OCI-LY7 (cell line): ENCODE measurements at regions of chr12 and their contacts with region 1.

Region 1: DNA sequence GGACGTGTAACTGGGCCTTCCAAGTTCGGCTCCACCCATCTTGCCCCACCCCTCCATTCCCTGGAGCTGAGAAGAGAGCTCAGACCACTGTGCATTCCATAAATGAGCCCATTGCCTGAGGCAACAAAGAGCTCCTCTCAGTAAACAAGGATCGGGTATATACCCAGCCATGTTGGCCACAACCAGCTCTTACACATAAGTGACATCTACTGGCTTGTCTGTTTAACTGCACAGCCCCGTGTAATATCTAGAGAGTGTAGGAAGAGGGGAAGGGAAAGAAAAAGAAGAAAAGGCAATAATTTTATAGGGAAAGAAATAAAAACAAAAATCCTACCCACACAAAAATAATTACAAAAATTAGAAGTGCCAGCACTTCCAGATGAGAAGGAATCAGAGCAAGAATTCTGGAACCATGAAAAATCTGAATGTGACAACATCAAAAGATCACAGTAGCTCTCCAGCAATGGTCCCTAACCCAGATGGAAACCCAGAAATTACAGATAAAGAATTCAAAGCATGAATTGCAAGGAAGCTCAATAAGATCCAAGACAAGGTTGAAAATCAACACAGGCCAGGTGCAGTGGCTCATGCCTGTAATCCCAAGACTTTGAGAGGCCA is 308.1 kb downstream of the RPAP3 start:
- DNase-seq: peak; percentile 60
- H3K4me3 ChIP-seq: no peak overlapping the region
- H3K27ac ChIP-seq: no peak overlapping the region
- H3K4me1 ChIP-seq: no peaks in the 10 kb centered on the region
- CTCF ChIP-seq: peak; percentile 86

Region 2: GRCh38 chr12:47071241-47071852 is 326.4 kb before region 1 on chr12:
- CTCF ChIA-PET with region 1: interaction called, 3 read pairs
- POLR2A ChIA-PET with region 1: no interaction called
- intact Hi-C with region 1: loop called (anchors 5 kb)
- DNase-seq: peak; percentile 37
- H3K4me3 ChIP-seq: no peak overlapping the region
- H3K27ac ChIP-seq: no peak overlapping the region
- H3K4me1 ChIP-seq: no peaks in the 10 kb centered on the region
- CTCF ChIP-seq: peak; percentile 82

Region 3: DNA sequence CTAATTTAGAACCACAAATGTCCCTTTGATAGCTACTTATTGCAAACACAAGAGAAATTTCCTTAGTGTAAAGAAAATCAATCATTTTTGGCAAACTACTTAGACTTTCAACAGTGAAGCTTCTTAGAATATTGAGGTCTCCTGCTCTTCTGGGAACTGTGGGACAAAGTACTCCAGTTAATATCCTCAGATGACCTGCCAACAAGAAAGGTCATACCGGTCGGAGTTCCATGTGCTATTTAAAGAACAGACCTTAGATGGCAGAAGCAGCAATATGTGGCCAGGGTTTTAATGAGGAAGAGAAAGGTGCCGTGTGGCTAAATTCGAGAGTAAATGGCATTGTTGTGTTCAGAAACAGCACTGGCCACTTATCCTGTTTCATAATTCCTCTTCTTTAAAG is 203.3 kb before region 1 on chr12:
- CTCF ChIA-PET with region 1: no interaction called
- POLR2A ChIA-PET with region 1: no interaction called
- intact Hi-C with region 1: no loop called
- DNase-seq: no peak
- H3K4me3 ChIP-seq: no peak overlapping the region
- H3K27ac ChIP-seq: no peak overlapping the region
- H3K4me1 ChIP-seq: peaks cover 61% of the 10 kb centered on the region
- CTCF ChIP-seq: no peak

Region 4: GRCh38 chr12:47312808-47313426 is 84.9 kb before region 1 on chr12:
- CTCF ChIA-PET with region 1: interaction called, 3 read pairs
- POLR2A ChIA-PET with region 1: no interaction called
- intact Hi-C with region 1: loop called (anchors 2 kb)
- DNase-seq: peak; percentile 80
- H3K4me3 ChIP-seq: no peak overlapping the region
- H3K27ac ChIP-seq: no peak overlapping the region
- H3K4me1 ChIP-seq: peaks cover 23% of the 10 kb centered on the region
- CTCF ChIP-seq: no peak